ENCODE measurements at regions of chr5 and their contacts with region 1.

Region 1: DNA sequence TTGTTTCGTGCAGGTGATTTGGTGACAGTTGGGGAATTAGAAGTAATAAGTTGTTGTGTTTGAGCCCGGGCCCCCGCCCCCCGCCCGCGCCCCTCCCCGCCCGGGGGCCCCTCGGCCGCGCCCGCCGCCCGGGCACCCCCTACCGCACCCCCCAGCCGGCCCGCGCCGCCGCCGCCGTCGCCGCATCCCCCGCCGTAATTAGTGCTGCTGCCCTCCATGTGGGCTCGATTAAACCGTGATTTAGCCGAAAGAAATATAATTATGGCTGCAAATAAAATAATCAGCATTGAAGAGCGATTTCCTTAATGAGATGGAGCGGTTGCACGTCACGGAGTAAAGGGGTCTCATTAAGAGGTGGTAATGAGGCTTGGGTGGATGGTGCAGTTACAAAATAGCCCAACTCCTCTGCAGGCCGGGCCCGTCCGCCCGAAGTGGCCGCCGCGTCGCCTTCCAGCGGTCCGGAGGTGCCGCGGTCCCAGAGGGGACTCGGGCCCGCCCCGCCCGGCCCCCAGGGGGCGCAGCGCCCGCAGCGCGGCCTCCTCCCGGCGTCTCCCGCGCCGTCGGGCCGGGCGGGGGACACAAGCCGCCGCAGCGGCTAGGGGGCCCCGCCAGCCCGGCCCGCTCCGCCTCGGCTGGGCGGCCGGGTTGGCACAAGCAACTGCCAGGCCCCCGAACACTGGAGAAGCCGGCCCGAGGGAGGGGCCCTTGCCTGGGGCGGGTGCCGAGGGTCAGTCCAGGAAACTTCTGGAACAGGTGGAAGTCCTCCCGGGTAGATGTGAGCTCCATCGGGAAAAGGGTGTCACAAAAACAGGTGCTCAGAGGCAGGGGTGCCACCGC is 6.9 kb upstream of the OTP start:
- H3K4me3 ChIP-seq: peak overlapping the region; percentile 50
- H3K27ac ChIP-seq: no peak overlapping the region; the same call in 1 of the 2 replicates
- H3K4me1 ChIP-seq: no peaks in the 10 kb centered on the region; the same call in 1 of the 2 replicates
- CTCF ChIP-seq: 0 out of 2 replicates have a peak, but pooled peaks have one; percentile 16

Region 2: DNA sequence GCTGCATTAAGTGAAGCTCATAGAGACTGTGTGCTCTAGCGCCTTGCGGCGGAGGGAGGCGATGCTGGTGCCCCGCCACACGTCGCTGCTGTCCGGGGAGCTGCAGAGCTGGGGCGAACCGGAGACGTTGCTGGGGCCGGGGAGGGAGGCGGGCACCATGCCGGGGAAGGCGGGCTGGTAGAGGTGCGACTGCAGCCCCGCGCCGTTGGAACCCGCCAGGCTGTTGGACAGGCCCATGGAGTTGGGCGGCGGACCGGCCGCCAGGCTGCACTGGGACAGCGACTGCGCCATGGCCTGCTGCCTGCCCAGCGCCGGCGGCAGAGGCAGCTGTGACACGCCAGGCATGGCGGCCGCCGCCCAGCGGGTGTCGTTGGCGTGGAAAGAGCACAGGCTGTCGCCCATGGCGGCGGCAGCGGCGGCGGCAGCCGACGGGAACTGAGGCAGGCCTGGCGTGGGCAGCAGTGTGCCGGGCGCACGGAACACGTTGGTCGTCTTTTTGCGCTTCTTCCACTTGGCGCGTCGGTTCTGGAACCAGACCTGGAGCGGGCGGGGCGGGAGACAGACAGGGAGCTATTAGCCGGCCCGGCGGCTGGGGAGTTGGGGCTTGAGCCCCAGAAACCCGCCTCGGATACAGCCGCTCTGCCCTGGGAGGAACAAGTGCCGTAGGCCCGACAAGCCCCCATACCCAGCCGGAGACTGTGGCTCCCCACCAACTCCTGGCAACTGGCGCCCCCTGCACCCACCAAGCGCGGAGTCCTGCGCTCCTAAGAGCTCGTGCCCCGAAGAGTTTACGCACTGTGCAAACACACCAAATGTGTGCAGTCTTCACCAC is 14.9 kb before region 1 on chr5:
- CTCF ChIA-PET with region 1: interaction called, 11 read pairs
- POLR2A ChIA-PET with region 1: interaction called, 5 read pairs
- H3K4me3 ChIP-seq: peak overlapping the region; percentile 62
- H3K27ac ChIP-seq: peak overlapping the region; percentile 71; the same call in 1 of the 2 replicates
- H3K4me1 ChIP-seq: peaks cover 3% of the 10 kb centered on the region
- CTCF ChIP-seq: peak; percentile 86